ENCODE measurements at regions of chr7 and their contacts with region 1.

Region 1: GRCh38 chr7:39517240-39517639 is 49.0 kb upstream of the YAE1 start:
- DNase-seq: no peak
- H3K4me3 Mint-ChIP-seq: no peak overlapping the region
- H3K27ac Mint-ChIP-seq: no peak overlapping the region
- H3K4me1 Mint-ChIP-seq: no peaks in the 10 kb centered on the region
- H3K27me3 Mint-ChIP-seq: peaks cover 13% of the 10 kb centered on the region

Region 2: GRCh38 chr7:38932509-38933168 is 584.6 kb before region 1 on chr7:
- intact Hi-C with region 1: loop called (anchors 1 kb)
- DNase-seq: peak; percentile 83
- H3K4me3 Mint-ChIP-seq: no peak overlapping the region
- H3K27ac Mint-ChIP-seq: no peak overlapping the region
- H3K4me1 Mint-ChIP-seq: peaks cover 1% of the 10 kb centered on the region
- H3K27me3 Mint-ChIP-seq: no peaks in the 10 kb centered on the region

Measured in activated CD4-positive, alpha-beta T cell treated with anti-CD3 and anti-CD28 coated beads, Interleukin-2, amount 10 ng/mL, durations not matched to agents 24 days and 14 days (primary cell).